ENCODE measurements at regions of chr20 and their contacts with region 1.

Region 1: GRCh38 chr20:57654363-57654997 is 34.3 kb upstream of the ZBP1 start:
- DNase-seq: peak; percentile 68
- H3K4me3 Mint-ChIP-seq: no peak overlapping the region
- H3K27ac Mint-ChIP-seq: no peak overlapping the region
- H3K4me1 Mint-ChIP-seq: peaks cover 29% of the 10 kb centered on the region
- H3K27me3 Mint-ChIP-seq: peaks cover 68% of the 10 kb centered on the region

Region 2: DNA sequence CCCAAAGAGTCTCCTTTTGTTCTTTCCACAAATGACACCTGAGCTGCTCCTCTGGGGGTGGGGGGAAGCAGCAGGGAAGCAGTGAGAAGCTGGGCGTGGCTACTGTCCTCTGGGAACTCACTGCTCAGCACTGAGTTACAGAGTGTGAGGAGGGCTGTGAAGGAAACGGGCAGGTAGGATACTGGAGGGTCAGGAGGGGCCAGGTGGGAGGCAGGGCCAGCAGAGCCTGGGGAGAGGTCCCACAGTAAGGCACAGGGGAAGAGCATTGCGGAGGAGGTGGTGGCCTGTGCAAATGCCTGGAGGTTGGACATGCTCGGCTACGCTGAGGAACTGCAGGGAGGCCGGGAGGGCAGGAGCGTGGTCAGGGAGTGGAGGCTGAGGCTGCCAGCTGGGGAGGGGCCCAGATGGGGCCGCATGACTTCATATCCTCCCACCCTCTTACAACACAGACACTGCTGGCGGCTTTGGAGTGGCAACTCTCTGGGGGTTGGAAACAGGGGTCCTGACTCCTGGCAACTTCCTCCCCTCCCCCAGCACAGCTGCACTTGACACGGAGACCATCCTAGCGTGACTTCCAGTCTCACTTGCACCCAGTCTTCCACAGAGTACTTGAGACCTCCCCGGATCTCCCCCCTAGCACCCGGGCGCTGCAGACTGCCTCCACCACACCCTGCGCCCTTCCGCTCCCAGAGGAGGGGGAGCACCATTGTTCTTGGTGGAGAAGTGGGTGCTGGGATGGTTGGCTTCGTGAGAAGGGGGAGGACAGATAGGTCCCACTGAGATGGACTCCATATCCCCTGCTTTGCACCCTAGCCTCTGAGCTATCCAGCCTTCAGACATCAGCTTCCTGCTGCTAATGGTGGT is 229.1 kb before region 1 on chr20:
- CTCF ChIA-PET with region 1: no interaction called
- DNase-seq: no peak
- H3K4me3 Mint-ChIP-seq: no peak overlapping the region
- H3K27ac Mint-ChIP-seq: peak overlapping the region; percentile 71
- H3K4me1 Mint-ChIP-seq: peaks cover 53% of the 10 kb centered on the region
- H3K27me3 Mint-ChIP-seq: peaks cover 35% of the 10 kb centered on the region

Region 3: DNA sequence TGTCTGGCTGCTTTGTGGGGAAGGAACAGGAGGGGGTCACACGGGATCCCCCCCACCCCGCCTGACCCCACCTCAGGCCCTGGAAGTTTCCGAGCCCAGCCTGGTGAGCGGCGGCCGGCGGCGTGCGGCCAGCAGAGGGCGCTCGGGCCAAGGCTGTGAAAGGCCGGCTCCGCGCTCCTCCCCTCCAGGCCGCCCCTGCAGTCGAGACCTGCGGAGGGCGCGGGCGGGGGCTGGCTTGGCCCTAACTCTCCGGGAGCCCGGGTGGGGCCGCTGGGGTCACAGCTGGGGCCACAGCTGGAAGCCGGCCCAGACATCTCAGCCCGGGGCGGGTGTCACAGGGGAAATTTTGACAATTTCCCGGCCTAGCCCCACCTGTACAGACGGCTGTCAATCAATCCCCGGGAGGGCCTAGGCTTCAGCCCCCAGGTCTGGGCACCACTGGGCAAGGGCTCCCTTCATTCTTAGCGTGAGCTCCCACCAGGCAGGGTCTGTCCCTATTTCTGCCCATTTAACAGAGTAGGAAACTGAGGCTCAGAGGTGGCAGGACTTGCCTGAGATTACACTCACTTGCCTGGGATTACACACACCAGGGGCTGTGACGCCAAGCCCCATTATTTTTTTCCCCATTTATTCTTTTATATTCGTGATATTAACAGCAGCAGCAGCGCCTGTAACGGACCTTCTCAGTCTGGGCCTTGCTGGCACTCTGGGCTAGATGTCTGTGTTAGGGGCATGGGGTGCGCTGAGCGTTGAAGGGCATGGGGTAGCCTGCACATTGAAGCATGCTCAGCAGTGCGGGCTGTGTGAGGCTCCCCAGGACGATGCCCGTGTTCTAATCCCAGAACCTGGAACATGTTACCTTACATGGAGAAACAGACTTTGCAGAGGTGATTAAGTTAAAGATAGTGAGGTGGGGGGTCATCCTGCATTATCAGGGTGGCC is 57.2 kb before region 1 on chr20:
- CTCF ChIA-PET with region 1: interaction called, 11 read pairs
- DNase-seq: peak; percentile 80
- H3K4me3 Mint-ChIP-seq: no peak overlapping the region
- H3K27ac Mint-ChIP-seq: no peak overlapping the region
- H3K4me1 Mint-ChIP-seq: no peaks in the 10 kb centered on the region
- H3K27me3 Mint-ChIP-seq: peaks cover 81% of the 10 kb centered on the region

Region 4: GRCh38 chr20:57622579-57623377 is 31.7 kb before region 1 on chr20:
- CTCF ChIA-PET with region 1: interaction called, 86 read pairs
- DNase-seq: peak; percentile 85
- H3K4me3 Mint-ChIP-seq: peak overlapping the region; percentile 48
- H3K27ac Mint-ChIP-seq: peak overlapping the region; percentile 88
- H3K4me1 Mint-ChIP-seq: peaks cover 87% of the 10 kb centered on the region
- H3K27me3 Mint-ChIP-seq: peaks cover 29% of the 10 kb centered on the region

Region 5: DNA sequence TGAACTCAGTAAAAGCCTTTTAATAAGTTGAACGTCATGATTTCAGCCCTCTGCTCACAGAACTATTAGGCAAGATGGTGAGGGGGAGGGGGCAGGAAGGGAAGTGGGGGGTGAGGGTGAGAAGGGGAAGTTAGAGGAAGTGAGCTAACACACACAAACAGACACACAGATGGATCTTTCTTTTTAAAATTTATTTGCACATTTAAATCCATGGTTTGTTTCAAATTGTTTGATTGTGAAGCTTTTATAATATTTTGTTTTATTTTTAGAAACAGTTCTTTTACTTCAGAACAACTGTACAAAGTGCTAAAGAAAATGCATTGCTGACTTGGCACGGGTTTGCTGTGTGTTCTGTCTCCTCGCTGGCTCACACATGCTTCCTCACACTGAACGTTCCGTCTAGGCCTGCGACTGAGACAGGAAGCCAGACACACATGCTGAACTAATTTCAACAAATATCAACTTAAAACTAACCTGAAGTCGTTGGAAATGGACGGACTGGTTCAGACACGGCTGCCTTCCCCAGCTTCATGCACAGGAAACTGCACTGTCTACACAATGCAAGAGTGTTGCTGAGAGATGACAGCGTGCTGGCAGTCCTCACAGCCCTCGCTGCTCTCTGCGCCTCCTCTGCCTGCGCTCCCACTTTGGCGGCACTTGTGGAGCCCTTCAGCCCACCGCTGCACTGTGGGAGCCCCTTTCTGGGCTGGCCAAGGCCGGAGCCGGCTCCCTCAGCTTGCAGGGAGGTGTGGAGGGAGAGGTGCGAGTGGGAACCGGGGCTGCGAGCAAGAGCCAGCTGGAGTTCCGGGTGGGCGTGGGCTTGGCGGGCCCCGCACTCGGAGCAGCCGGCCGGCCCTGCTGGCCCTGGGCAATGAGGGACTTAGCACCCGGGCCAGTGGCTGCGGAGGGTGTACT is 26.2 kb before region 1 on chr20:
- CTCF ChIA-PET with region 1: interaction called, 86 read pairs
- DNase-seq: peak; percentile 72
- H3K4me3 Mint-ChIP-seq: peak overlapping the region; percentile 53
- H3K27ac Mint-ChIP-seq: peak overlapping the region; percentile 97
- H3K4me1 Mint-ChIP-seq: peaks cover 81% of the 10 kb centered on the region
- H3K27me3 Mint-ChIP-seq: peaks cover 45% of the 10 kb centered on the region

Region 6: DNA sequence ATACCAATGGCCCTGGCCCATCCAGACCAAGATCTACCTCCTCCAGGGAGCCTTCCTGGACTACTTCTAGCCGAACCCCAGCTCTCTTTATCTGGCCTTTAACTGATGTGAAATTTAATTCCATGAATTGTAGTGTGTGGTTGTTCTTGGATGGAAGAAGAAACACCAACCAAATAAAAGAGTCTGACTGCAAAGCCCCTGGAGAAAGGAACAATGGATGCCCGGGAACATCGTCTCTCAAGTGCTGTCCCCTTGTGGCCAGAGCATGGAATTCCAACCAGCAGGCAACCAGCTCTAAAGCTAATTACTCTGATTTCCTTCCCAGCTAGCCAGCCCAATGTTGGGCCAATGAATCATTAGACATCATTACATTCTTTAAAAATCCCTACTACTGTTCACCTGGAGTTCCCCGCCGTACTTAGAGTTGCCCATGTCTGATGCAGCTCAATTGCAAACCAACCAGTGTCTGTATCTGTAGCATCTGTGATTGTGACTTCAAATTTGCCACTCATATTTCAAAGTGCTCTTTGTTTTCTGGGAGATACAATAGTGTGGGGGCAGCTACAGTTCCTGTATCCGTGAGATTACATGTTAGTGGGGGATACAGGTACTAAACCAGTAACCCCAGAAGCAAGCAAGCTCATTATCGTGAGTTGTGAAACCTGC is 432.8 kb after region 1 on chr20:
- CTCF ChIA-PET with region 1: interaction called, 28 read pairs
- DNase-seq: peak; percentile 25
- H3K4me3 Mint-ChIP-seq: no peak overlapping the region
- H3K27ac Mint-ChIP-seq: no peak overlapping the region
- H3K4me1 Mint-ChIP-seq: no peaks in the 10 kb centered on the region
- H3K27me3 Mint-ChIP-seq: peaks cover 17% of the 10 kb centered on the region

Measured in activated naive CD4-positive, alpha-beta T cell treated with anti-CD3 and anti-CD28 coated beads, Interleukin-2, amount 10 ng/mL, durations not matched to agents 7 days and 5 days (primary cell).